ENCODE measurements at regions of chr12 and their contacts with region 1.

Region 1: GRCh38 chr12:109775172-109775881 is 57.9 kb downstream of the TRPV4 start:
- DNase-seq: peak; percentile 81 to 85
- H3K4me3 ChIP-seq: no peak overlapping the region
- H3K4me3 Mint-ChIP-seq: no peak overlapping the region
- H3K27ac Mint-ChIP-seq: no peak overlapping the region
- H3K4me1 ChIP-seq: peaks cover 7% of the 10 kb centered on the region; the same call in 1 of the 2 replicates
- H3K4me1 Mint-ChIP-seq: peaks cover 12% of the 10 kb centered on the region
- H3K27me3 ChIP-seq: no peaks in the 10 kb centered on the region
- H3K27me3 Mint-ChIP-seq: no peaks in the 10 kb centered on the region
- CTCF ChIP-seq: peak; percentile 79 to 94

Region 2: GRCh38 chr12:109428037-109428629 is 347.2 kb before region 1 on chr12:
- CTCF ChIA-PET with region 1: interaction called, 4 read pairs
- POLR2A ChIA-PET with region 1: no interaction called
- intact Hi-C with region 1: loop called (anchors 1 kb)
- DNase-seq: peak; percentile 68 to 78
- H3K4me3 ChIP-seq: no peak overlapping the region
- H3K4me3 Mint-ChIP-seq: no peak overlapping the region
- H3K27ac Mint-ChIP-seq: no peak overlapping the region
- H3K4me1 ChIP-seq: no peaks in the 10 kb centered on the region
- H3K4me1 Mint-ChIP-seq: no peaks in the 10 kb centered on the region
- H3K27me3 ChIP-seq: no peaks in the 10 kb centered on the region
- H3K27me3 Mint-ChIP-seq: no peaks in the 10 kb centered on the region
- CTCF ChIP-seq: peak; percentile 92 to 93

Region 3: GRCh38 chr12:109518820-109519665 is 256.3 kb before region 1 on chr12:
- CTCF ChIA-PET with region 1: interaction called, 9 read pairs
- POLR2A ChIA-PET with region 1: no interaction called
- intact Hi-C with region 1: loop called (anchors 1 kb)
- DNase-seq: peak in 1 of 2 experiments; percentile 72
- H3K4me3 ChIP-seq: no peak overlapping the region
- H3K4me3 Mint-ChIP-seq: no peak overlapping the region
- H3K27ac Mint-ChIP-seq: no peak overlapping the region
- H3K4me1 ChIP-seq: no peaks in the 10 kb centered on the region
- H3K4me1 Mint-ChIP-seq: no peaks in the 10 kb centered on the region
- H3K27me3 ChIP-seq: no peaks in the 10 kb centered on the region
- H3K27me3 Mint-ChIP-seq: no peaks in the 10 kb centered on the region
- CTCF ChIP-seq: peak; percentile 87 to 88

Region 4: DNA sequence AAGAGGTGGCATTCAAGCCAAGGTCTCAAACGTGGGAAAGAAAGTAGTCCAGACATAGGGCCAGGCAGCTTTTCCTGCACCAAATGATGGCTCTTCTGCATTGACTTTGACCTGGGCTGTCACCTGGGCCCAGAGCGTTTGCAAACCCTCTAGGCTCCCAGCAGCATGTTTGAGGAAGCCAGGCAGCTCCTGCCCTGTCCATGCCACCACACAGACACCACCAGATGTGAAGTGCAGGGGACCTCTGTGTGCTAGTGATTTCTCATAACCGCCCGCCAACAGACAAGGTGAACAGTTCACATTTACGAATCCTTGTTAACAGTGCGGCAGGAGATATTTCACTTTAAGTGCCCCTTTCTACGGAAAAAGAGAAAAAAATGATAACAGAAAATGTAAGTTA is 111.5 kb before region 1 on chr12:
- CTCF ChIA-PET with region 1: no interaction called
- POLR2A ChIA-PET with region 1: no interaction called
- intact Hi-C with region 1: no loop called
- DNase-seq: no peak
- H3K4me3 ChIP-seq: no peak overlapping the region
- H3K4me3 Mint-ChIP-seq: no peak overlapping the region
- H3K27ac Mint-ChIP-seq: no peak overlapping the region
- H3K4me1 ChIP-seq: no peaks in the 10 kb centered on the region
- H3K4me1 Mint-ChIP-seq: no peaks in the 10 kb centered on the region
- H3K27me3 ChIP-seq: no peaks in the 10 kb centered on the region
- H3K27me3 Mint-ChIP-seq: no peaks in the 10 kb centered on the region
- CTCF ChIP-seq: no peak

Region 5: GRCh38 chr12:109719236-109720022 is 55.9 kb before region 1 on chr12:
- CTCF ChIA-PET with region 1: interaction called, 15 read pairs
- POLR2A ChIA-PET with region 1: no interaction called
- intact Hi-C with region 1: loop called (anchors 1 kb)
- DNase-seq: peak; percentile 50 to 53
- H3K4me3 ChIP-seq: no peak overlapping the region
- H3K4me3 Mint-ChIP-seq: no peak overlapping the region
- H3K27ac Mint-ChIP-seq: peak overlapping the region; percentile 60
- H3K4me1 ChIP-seq: peaks cover 26% of the 10 kb centered on the region
- H3K4me1 Mint-ChIP-seq: peaks cover 15% of the 10 kb centered on the region
- H3K27me3 ChIP-seq: no peaks in the 10 kb centered on the region
- H3K27me3 Mint-ChIP-seq: no peaks in the 10 kb centered on the region
- CTCF ChIP-seq: peak; percentile 29 to 61

Region 6: DNA sequence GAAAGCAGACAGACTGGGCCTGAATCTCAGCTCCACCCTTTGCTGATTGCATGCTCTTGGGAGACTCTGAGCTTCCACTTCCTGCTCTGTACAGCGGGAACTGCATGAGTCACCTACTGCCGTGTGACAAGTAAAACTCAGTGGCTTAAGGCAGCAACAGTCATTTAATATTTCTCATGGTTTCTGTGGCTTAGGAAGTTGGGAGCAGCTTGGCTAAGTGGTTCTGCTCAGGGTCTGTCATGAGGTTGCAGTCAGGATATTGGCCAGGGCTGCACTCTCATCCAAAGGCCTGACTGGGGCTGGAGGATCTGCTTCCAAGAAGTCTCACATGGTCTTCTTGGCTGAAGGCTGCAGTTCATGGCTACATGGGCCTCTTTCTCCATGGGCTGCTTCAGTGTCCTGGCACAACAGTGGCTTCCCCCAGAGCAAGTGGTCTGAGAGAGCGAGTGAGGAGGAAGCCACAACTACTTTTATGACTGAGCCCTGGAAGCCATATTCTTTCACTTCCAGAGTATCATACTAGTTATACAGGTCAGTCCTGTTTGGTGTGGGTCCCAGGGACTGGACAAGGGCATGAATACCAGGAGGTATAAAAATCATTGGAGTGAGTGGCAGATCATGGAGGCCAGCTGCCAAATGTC is 12.0 kb before region 1 on chr12:
- CTCF ChIA-PET with region 1: interaction called, 12 read pairs
- POLR2A ChIA-PET with region 1: no interaction called
- intact Hi-C with region 1: no loop called
- DNase-seq: peak in 1 of 2 experiments; percentile 34
- H3K4me3 ChIP-seq: no peak overlapping the region
- H3K4me3 Mint-ChIP-seq: no peak overlapping the region
- H3K27ac Mint-ChIP-seq: no peak overlapping the region
- H3K4me1 ChIP-seq: no peaks in the 10 kb centered on the region
- H3K4me1 Mint-ChIP-seq: no peaks in the 10 kb centered on the region
- H3K27me3 ChIP-seq: no peaks in the 10 kb centered on the region
- H3K27me3 Mint-ChIP-seq: no peaks in the 10 kb centered on the region
- CTCF ChIP-seq: no peak

Measured in Caco-2 (cell line).